Activated CD4-positive, alpha-beta T cell treated with anti-CD3 and anti-CD28 coated beads for 36 hours (primary cell): ENCODE measurements at regions of chr6 and their contacts with region 1.

Region 1: DNA sequence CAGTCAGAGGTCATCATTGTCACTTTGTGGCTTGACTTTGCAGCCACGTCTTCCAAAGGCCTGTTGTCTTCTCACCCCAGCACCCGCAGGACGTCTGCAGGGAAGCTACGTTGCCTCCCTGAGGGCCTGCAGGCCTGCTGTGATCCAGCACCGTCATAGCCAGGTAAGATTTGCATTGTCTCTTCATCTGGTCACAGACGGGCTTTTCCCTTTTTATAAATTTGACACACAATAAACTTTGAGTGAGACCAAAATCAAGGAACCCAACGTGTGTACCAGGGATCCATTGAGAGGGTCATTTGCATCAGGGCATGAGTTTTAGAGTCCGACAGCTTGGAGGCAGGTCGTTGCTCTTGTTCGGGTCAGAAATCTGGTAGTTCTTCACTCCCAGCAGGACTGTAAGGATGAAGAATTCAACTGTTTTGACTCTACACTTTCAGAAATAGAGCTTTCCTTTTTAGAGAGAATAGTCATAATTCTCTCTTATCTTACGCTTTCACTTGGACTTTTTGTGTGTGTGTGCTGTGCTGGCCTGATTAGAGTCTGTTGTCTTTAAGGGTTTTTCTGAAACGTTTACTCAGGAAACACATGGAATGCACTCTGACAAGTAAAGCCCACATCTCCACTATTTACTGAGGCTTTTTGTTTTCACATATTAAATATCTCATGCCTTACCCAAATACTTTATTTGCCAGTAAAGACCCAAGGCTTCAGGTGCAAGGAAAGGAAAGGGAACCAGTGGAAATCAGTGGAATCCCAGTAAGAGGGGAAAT is 177.2 kb upstream of the TAB2 start:
- DNase-seq: peak; percentile 85
- ATAC-seq: peak; percentile 84
- H3K4me3 Mint-ChIP-seq: peak overlapping the region; percentile 63
- H3K27ac Mint-ChIP-seq: peak overlapping the region; percentile 97
- H3K4me1 Mint-ChIP-seq: peaks cover 42% of the 10 kb centered on the region
- H3K27me3 Mint-ChIP-seq: no peaks in the 10 kb centered on the region

Region 2: GRCh38 chr6:148608199-148608951 is 531.9 kb before region 1 on chr6:
- CTCF ChIA-PET with region 1: no interaction called
- POLR2A ChIA-PET with region 1: no interaction called
- intact Hi-C with region 1: no loop called
- DNase-seq: no peak
- ATAC-seq: no peak
- H3K4me3 Mint-ChIP-seq: no peak overlapping the region
- H3K27ac Mint-ChIP-seq: no peak overlapping the region
- H3K4me1 Mint-ChIP-seq: no peaks in the 10 kb centered on the region
- H3K27me3 Mint-ChIP-seq: peaks cover 8% of the 10 kb centered on the region

Region 3: DNA sequence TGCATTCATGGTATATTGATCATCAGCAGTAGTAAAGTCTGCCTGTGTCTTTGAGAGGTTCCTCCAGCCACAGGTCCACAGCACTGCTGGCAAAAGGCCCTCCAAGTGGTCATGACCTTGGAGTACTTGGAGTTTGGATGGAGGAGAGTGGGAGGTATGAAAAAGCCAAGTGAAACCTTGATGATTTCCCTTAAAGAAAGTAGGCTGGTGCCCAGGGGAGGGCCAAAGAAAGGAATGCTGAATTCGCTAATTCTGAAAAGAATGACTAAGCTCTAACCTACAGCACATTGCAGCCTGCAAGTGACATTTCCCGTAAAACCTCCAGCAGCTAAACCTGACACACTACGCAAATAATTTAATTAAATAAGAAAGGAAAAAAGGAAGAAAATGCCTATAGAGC is 46.2 kb before region 1 on chr6:
- CTCF ChIA-PET with region 1: no interaction called
- POLR2A ChIA-PET with region 1: interaction called, 4 read pairs
- intact Hi-C with region 1: loop called (anchors 2 to 5 kb)
- DNase-seq: peak; percentile 35
- ATAC-seq: peak; percentile 49
- H3K4me3 Mint-ChIP-seq: peak overlapping the region; percentile 23
- H3K27ac Mint-ChIP-seq: peak overlapping the region; percentile 84
- H3K4me1 Mint-ChIP-seq: peaks cover 38% of the 10 kb centered on the region
- H3K27me3 Mint-ChIP-seq: no peaks in the 10 kb centered on the region

Region 4: DNA sequence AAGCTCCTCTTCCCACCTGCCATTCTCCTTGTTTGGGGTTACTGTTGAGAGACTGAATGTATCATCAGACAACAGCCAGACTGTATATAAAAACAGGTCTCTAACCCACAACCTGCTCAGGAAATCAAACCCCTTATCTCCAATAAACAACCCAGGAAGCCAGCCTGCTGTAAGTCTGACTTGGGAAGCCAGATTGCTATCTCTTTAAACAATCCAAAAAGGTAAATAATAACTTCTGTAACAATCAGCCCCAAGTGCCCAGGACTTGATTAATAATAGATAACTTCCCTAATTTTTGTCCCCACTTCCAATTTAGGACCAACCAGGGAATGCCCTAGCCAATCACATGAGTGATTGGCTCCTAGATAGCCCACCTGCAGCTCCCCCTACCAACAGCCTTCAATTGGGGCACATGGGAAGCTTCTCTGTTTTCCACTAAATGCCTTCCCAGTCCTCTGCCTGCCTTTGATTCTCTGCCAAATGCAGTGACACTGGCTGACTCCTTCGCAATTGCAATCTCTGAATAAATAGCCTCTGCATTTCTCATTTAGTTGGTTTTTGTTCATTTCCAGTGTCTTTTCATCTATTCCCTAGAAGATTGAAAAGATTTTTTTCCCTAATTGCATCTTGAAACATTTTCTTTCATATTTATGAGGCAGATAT is 60.1 kb after region 1 on chr6:
- CTCF ChIA-PET with region 1: no interaction called
- POLR2A ChIA-PET with region 1: no interaction called
- intact Hi-C with region 1: no loop called
- DNase-seq: no peak
- ATAC-seq: no peak
- H3K4me3 Mint-ChIP-seq: no peak overlapping the region
- H3K27ac Mint-ChIP-seq: no peak overlapping the region
- H3K4me1 Mint-ChIP-seq: peaks cover 2% of the 10 kb centered on the region
- H3K27me3 Mint-ChIP-seq: no peaks in the 10 kb centered on the region

Region 5: GRCh38 chr6:149211046-149211571 is 70.8 kb after region 1 on chr6:
- CTCF ChIA-PET with region 1: no interaction called
- POLR2A ChIA-PET with region 1: no interaction called
- intact Hi-C with region 1: loop called (anchors 2 kb)
- DNase-seq: peak; percentile 36
- ATAC-seq: peak; percentile 54
- H3K4me3 Mint-ChIP-seq: no peak overlapping the region
- H3K27ac Mint-ChIP-seq: peak overlapping the region; percentile 82
- H3K4me1 Mint-ChIP-seq: peaks cover 3% of the 10 kb centered on the region
- H3K27me3 Mint-ChIP-seq: no peaks in the 10 kb centered on the region

Region 6: DNA sequence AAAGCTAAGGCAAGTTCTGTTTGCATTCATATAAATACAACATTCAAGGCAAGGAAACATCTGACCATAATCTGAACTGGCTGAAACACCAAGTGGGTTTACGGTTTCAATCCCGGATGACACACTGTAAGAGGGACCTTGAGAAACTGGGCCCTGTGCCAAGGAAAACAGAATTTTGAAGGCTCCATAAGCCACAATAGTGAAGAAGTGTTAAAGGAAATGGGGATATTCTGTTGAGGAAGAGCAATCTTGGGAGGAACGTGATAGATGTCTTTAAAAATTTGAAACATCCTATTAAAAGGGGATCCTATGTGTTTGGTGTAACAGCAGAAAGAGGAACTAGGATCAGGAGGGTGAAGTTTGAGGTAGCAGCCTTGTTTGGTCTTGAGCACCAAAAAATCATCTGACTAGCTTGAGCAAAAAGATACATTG is 94.8 kb after region 1 on chr6:
- CTCF ChIA-PET with region 1: no interaction called
- POLR2A ChIA-PET with region 1: no interaction called
- intact Hi-C with region 1: loop called (anchors 1 kb)
- DNase-seq: peak; percentile 20
- ATAC-seq: no peak
- H3K4me3 Mint-ChIP-seq: no peak overlapping the region
- H3K27ac Mint-ChIP-seq: peak overlapping the region; percentile 98
- H3K4me1 Mint-ChIP-seq: peaks cover 44% of the 10 kb centered on the region
- H3K27me3 Mint-ChIP-seq: no peaks in the 10 kb centered on the region

Region 7: GRCh38 chr6:149278997-149279396 is 138.7 kb after region 1 on chr6:
- CTCF ChIA-PET with region 1: no interaction called
- POLR2A ChIA-PET with region 1: no interaction called
- intact Hi-C with region 1: loop called in 1 of 2 experiments (anchors 5 kb)
- DNase-seq: no peak
- ATAC-seq: no peak
- H3K4me3 Mint-ChIP-seq: no peak overlapping the region
- H3K27ac Mint-ChIP-seq: no peak overlapping the region
- H3K4me1 Mint-ChIP-seq: peaks cover 15% of the 10 kb centered on the region
- H3K27me3 Mint-ChIP-seq: no peaks in the 10 kb centered on the region

Region 8: GRCh38 chr6:149342525-149342924 is 202.2 kb after region 1 on chr6:
- CTCF ChIA-PET with region 1: no interaction called
- POLR2A ChIA-PET with region 1: no interaction called
- intact Hi-C with region 1: loop called (anchors 5 kb)
- DNase-seq: no peak
- ATAC-seq: peak; percentile 31
- H3K4me3 Mint-ChIP-seq: peak overlapping the region; percentile 36
- H3K27ac Mint-ChIP-seq: peak overlapping the region; percentile 70
- H3K4me1 Mint-ChIP-seq: peaks cover 81% of the 10 kb centered on the region
- H3K27me3 Mint-ChIP-seq: no peaks in the 10 kb centered on the region

Region 9: GRCh38 chr6:149499066-149499465 is 358.7 kb after region 1 on chr6:
- CTCF ChIA-PET with region 1: no interaction called
- POLR2A ChIA-PET with region 1: interaction called, 3 read pairs
- intact Hi-C with region 1: loop called (anchors 1 to 10 kb)
- DNase-seq: no peak
- ATAC-seq: no peak
- H3K4me3 Mint-ChIP-seq: no peak overlapping the region
- H3K27ac Mint-ChIP-seq: peak overlapping the region; percentile 76
- H3K4me1 Mint-ChIP-seq: peaks cover 85% of the 10 kb centered on the region
- H3K27me3 Mint-ChIP-seq: no peaks in the 10 kb centered on the region